AG04450 (cell line): ENCODE measurements at regions of chr19 and their contacts with region 1.

Region 1: GRCh38 chr19:3479177-3479833 is 1.0 kb downstream of the SMIM24 start:
- DNase-seq: no peak
- H3K4me3 ChIP-seq: no peak overlapping the region
- H3K27ac ChIP-seq: no peak overlapping the region
- H3K27me3 ChIP-seq: peaks cover 26% of the 10 kb centered on the region
- CTCF ChIP-seq: no peak

Region 2: DNA sequence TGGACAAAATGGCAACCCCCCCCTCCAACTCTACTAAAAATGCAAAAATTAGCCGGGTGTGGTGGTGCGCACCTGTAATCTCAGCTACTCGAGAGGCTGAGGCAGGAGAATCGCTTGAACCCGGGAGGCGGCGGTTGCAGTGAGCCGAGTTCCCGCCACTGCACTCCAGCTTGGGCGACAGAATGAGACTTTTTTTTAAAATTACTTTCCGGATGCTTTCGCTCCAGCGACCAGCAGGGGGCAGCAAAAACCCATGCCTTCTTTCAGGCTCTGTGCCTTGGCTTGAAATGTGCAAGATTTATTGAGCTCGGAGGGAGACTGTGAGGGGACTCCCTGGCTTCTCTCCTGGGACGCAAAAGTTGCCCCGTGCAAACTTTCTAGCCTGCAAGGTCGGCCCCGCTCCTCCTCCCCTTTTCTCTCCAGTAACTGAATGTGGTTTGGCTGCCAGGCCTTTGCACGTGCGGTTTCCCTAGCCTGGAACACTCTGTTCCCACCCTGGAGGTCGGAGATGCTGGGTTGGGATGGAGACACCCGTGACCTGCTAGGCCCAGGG is 174.4 kb before region 1 on chr19:
- CTCF ChIA-PET with region 1: interaction called, 64 read pairs
- POLR2A ChIA-PET with region 1: no interaction called
- DNase-seq: peak; percentile 32
- H3K4me3 ChIP-seq: no peak overlapping the region
- H3K27ac ChIP-seq: no peak overlapping the region
- H3K27me3 ChIP-seq: peaks cover 14% of the 10 kb centered on the region
- CTCF ChIP-seq: peak; percentile 88

Region 3: GRCh38 chr19:3494051-3494450 is 14.7 kb after region 1 on chr19:
- CTCF ChIA-PET with region 1: interaction called, 11 read pairs
- POLR2A ChIA-PET with region 1: no interaction called
- DNase-seq: no peak
- H3K4me3 ChIP-seq: no peak overlapping the region
- H3K27ac ChIP-seq: no peak overlapping the region
- H3K27me3 ChIP-seq: no peaks in the 10 kb centered on the region
- CTCF ChIP-seq: no peak

Region 4: GRCh38 chr19:3516675-3517207 is 37.4 kb after region 1 on chr19:
- CTCF ChIA-PET with region 1: no interaction called
- POLR2A ChIA-PET with region 1: no interaction called
- DNase-seq: no peak
- H3K4me3 ChIP-seq: no peak overlapping the region
- H3K27ac ChIP-seq: no peak overlapping the region
- H3K27me3 ChIP-seq: no peaks in the 10 kb centered on the region
- CTCF ChIP-seq: no peak